Activated CD8-positive, alpha-beta T cell treated with anti-CD3 and anti-CD28 coated beads for 36 hours (primary cell): ENCODE measurements at regions of chr2 and their contacts with region 1.

Region 1: DNA sequence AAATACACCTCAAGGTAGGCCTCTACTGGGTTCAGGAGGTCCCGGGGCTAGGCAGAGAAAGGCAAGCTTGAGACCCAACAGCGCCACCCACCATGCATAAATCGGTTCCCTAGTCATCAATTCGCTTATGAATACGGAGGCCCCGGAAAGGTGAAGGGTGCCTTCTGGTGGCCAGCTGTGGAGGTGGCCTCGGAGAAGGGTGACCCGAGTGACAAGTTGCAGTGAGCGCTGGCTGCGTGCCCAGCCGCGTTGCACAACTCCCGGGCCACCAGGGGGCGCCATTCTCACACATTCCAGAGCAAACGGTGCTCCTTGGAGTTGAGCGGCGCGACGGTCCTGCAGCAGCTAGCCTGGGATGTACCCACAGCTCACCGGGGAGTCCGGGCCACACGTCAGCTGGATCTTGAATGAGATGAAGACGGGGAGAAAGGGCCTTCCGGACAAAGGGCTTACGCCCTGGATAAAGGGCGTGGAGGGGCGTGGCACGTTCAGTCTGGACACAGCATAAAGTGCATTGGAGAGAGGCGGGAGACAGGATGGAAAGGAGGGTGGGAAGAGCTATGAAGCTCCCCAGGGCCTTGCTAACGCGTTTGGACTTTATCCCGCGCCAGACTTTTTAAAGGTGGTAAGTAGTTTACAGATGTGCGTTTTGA is 20.4 kb downstream of the TMSB10 start:
- DNase-seq: peak; percentile 100
- ATAC-seq: peak; percentile 81
- H3K4me3 Mint-ChIP-seq: peak overlapping the region; percentile 91
- H3K27ac Mint-ChIP-seq: peak overlapping the region; percentile 84
- H3K4me1 Mint-ChIP-seq: peaks cover 37% of the 10 kb centered on the region
- H3K27me3 Mint-ChIP-seq: no peaks in the 10 kb centered on the region
- CTCF ChIP-seq: peak; percentile 99

Region 2: GRCh38 chr2:84840306-84840705 is 85.5 kb before region 1 on chr2:
- CTCF ChIA-PET with region 1: interaction called, 19 read pairs
- POLR2A ChIA-PET with region 1: interaction called, 3 read pairs
- intact Hi-C with region 1: no loop called
- DNase-seq: no peak
- ATAC-seq: peak; percentile 25
- H3K4me3 Mint-ChIP-seq: peak overlapping the region; percentile 61
- H3K27ac Mint-ChIP-seq: peak overlapping the region; percentile 75
- H3K4me1 Mint-ChIP-seq: peaks cover 80% of the 10 kb centered on the region
- H3K27me3 Mint-ChIP-seq: no peaks in the 10 kb centered on the region
- CTCF ChIP-seq: no peak

Region 3: GRCh38 chr2:84870306-84870705 is 55.5 kb before region 1 on chr2:
- CTCF ChIA-PET with region 1: interaction called, 33 read pairs
- POLR2A ChIA-PET with region 1: interaction called, 14 read pairs
- intact Hi-C with region 1: no loop called
- DNase-seq: no peak
- ATAC-seq: no peak
- H3K4me3 Mint-ChIP-seq: no peak overlapping the region
- H3K27ac Mint-ChIP-seq: peak overlapping the region; percentile 37
- H3K4me1 Mint-ChIP-seq: peaks cover 77% of the 10 kb centered on the region
- H3K27me3 Mint-ChIP-seq: no peaks in the 10 kb centered on the region
- CTCF ChIP-seq: no peak

Region 4: GRCh38 chr2:84905181-84906107 is 20.4 kb before region 1 on chr2 and contains the start of gene TMSB10:
- CTCF ChIA-PET with region 1: interaction called, 60 read pairs
- POLR2A ChIA-PET with region 1: interaction called, 170 read pairs
- intact Hi-C with region 1: loop called (anchors 2 kb)
- DNase-seq: peak; percentile 91
- ATAC-seq: peak; percentile 72
- H3K4me3 Mint-ChIP-seq: peak within 1 kb of the TSS; percentile 98
- H3K27ac Mint-ChIP-seq: peak within 1 kb of the TSS; percentile 96
- H3K4me1 Mint-ChIP-seq: peaks cover 59% of the 10 kb centered on the region
- H3K27me3 Mint-ChIP-seq: no peaks in the 10 kb centered on the region
- CTCF ChIP-seq: no peak
- total RNA-seq, gene TMSB10: 2,035 to 2,060 TPM

Region 5: GRCh38 chr2:84958135-84959044 is 32.5 kb after region 1 on chr2:
- CTCF ChIA-PET with region 1: interaction called, 12 read pairs
- POLR2A ChIA-PET with region 1: no interaction called
- intact Hi-C with region 1: no loop called
- DNase-seq: no peak
- ATAC-seq: peak; percentile 37
- H3K4me3 Mint-ChIP-seq: no peak overlapping the region
- H3K27ac Mint-ChIP-seq: peak overlapping the region; percentile 7
- H3K4me1 Mint-ChIP-seq: peaks cover 19% of the 10 kb centered on the region
- H3K27me3 Mint-ChIP-seq: no peaks in the 10 kb centered on the region
- CTCF ChIP-seq: no peak

Region 6: DNA sequence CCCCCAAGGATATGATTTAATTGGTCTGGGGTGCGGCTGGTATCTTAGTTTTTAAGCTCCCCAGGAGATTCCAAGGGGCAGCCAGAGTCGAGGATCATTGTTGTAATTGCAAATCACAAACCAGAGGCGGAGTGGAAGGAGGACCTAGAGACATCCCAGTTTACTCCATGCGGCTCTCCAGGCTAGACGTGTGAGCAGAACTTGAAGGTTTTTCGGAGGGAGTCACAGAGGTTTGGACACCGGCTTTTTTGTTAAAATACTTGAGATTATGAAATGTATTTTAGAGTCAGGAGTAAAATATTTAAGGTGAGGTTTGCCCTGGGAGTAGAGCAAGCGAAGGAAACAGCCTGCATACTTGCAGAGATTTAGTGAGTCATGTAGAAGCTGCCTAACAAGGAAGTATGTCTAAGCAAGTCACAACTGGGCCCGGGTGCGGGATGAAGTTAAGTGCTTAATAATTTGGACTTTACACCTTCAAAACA is 362.4 kb after region 1 on chr2:
- CTCF ChIA-PET with region 1: interaction called, 11 read pairs
- POLR2A ChIA-PET with region 1: no interaction called
- intact Hi-C with region 1: no loop called
- DNase-seq: no peak
- ATAC-seq: no peak
- H3K4me3 Mint-ChIP-seq: no peak overlapping the region
- H3K27ac Mint-ChIP-seq: no peak overlapping the region
- H3K4me1 Mint-ChIP-seq: peaks cover 24% of the 10 kb centered on the region
- H3K27me3 Mint-ChIP-seq: no peaks in the 10 kb centered on the region
- CTCF ChIP-seq: no peak

Region 7: DNA sequence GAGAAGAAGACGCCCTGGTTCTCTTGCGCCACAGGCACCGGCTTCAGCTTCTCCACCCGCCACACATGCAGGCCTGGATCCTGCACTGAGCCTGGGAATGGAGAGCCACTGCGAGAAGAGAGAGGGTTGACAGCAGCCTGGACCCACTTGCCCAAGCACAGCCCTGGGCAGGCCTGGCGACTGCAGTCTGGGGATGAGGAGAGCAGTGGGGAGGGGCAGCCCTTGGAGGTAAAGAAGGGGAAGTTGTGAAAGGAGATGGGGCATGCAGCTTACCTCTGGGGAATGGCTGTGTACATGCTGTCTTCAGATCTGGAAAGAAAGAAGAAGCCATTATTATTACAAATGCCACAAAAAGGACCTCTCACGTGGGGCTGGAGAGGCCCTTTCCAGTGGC is 476.0 kb after region 1 on chr2:
- CTCF ChIA-PET with region 1: no interaction called
- POLR2A ChIA-PET with region 1: no interaction called
- intact Hi-C with region 1: no loop called
- DNase-seq: no peak
- ATAC-seq: no peak
- H3K4me3 Mint-ChIP-seq: no peak overlapping the region
- H3K27ac Mint-ChIP-seq: no peak overlapping the region
- H3K4me1 Mint-ChIP-seq: peaks cover 15% of the 10 kb centered on the region
- H3K27me3 Mint-ChIP-seq: no peaks in the 10 kb centered on the region
- CTCF ChIP-seq: no peak